Left lung (tissue), 14 donors: ENCODE measurements at regions of chr11 and their contacts with region 1.

Region 1: GRCh38 chr11:8033305-8034105 is 46.4 kb downstream of the EIF3F start:
- DNase-seq: peak in 3 of 4 donors; percentile 82 to 94 (median 87)
- ATAC-seq: peak; percentile 95
- H3K4me3 ChIP-seq: no peak overlapping the region
- H3K27ac ChIP-seq: no peak overlapping the region
- H3K4me1 ChIP-seq: peaks cover 4 to 6% of the 10 kb centered on the region in 2 donors
- H3K27me3 ChIP-seq: peaks cover 0 to 40% of the 10 kb centered on the region in 2 donors
- CTCF ChIP-seq: peak; percentile 85

Region 2: DNA sequence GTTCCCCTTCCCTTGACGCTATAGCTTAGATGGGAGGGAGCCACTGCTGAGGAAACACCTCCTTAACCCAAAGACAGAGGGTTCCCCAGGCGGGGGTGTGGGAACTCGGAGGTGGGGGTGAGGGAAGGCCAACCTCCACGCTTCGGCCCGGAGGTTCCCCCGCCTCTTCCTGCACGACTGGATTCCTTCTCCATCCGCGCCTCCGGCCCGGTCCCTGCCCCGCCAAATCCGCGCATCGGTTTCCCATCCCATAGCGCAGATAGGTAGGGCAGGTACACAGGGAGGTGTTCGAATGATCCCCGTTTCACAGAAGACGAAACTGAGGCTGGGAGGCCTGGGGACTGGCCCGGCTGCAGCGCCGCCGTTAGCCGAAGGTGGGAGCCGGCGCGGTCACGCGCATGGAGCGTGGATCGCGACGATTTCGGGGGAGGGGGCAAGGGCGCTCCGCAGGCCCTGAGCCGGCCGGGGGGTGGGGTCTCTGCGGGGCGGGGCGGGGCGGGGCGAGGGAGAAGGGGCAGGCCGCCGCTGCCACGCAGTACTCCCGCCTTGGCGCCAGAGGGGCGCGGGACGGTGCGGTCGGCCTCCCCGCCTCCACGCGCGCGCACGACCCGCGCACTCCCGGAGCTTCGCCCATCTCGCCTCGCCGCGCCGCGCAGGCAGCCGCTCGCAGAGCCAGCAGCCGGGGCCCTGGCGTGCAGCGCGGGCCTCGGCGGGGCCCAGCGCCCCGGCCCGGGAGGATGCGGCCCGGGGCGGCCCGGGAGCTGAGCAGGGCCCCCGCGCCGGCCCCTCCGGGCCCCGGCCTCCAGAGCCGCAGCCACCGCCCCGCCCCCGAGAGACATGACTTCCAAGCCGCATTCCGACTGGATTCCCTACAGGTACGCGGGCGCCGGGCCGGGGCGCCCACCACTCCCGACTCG is 47.4 kb after region 1 on chr11 and contains the start of gene TUB:
- intact Hi-C with region 1: loop called in 1 of 2 experiments (anchors 10 kb)
- DNase-seq: peak in 1 of 4 donors; percentile 68
- ATAC-seq: peak; percentile 68
- H3K4me3 ChIP-seq: peak within 1 kb of the TSS; percentile 29 to 38
- H3K27ac ChIP-seq: no peak within 1 kb of the TSS
- H3K4me1 ChIP-seq: peaks cover 0 to 4% of the 10 kb centered on the region in 2 donors
- H3K27me3 ChIP-seq: peaks cover 0 to 68% of the 10 kb centered on the region in 2 donors
- CTCF ChIP-seq: no peak
- polyA plus RNA-seq, gene TUB: 24.7 to 30.0 (median 27.0) TPM